T-cell (primary cell): ENCODE measurements at regions of chr14 and their contacts with region 1.

Region 1: DNA sequence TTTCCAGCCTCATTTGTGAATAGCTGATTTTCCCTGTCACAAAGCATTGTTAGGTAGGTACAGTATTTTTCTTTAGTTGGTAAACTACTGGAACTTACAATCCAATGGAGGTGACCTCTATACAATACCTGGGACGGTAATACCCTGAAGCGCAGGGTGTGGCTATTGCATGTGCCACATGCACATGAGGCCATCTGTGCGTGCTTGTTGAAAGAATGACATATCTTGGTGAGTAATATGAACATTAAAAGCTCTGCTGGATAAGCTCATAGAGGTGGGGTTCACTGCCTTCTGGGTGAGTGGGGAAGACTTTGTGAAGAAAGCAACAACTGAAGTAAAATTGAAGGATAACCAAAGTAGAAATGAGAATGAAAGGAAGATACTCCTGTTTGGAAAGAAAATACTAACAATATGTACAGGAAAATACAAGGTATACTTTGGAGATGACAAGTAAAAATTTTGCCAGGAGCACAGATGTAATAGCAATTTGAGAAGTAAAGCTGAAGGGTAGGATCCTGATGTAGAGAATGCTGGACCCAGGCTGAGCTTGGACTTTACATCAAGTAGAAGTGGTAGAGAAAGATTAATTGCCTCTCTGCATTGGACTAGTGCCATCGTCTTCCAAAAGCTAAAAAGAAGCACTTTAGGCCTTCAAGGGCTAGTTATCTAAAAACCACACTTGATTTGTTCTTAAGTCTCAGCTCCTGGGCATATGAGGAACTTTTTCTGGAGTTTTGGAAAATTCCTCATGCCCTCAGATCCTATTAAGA is 97.1 kb downstream of the SLC38A6 start:
- DNase-seq: no peak
- ATAC-seq: no peak
- H3K4me3 ChIP-seq: no peak overlapping the region
- H3K4me3 Mint-ChIP-seq: no peak overlapping the region
- H3K27ac ChIP-seq: no peak overlapping the region
- H3K27ac Mint-ChIP-seq: no peak overlapping the region
- H3K4me1 ChIP-seq: no peaks in the 10 kb centered on the region
- H3K4me1 Mint-ChIP-seq: no peaks in the 10 kb centered on the region
- H3K27me3 ChIP-seq: no peaks in the 10 kb centered on the region
- H3K27me3 Mint-ChIP-seq: no peaks in the 10 kb centered on the region

Region 2: DNA sequence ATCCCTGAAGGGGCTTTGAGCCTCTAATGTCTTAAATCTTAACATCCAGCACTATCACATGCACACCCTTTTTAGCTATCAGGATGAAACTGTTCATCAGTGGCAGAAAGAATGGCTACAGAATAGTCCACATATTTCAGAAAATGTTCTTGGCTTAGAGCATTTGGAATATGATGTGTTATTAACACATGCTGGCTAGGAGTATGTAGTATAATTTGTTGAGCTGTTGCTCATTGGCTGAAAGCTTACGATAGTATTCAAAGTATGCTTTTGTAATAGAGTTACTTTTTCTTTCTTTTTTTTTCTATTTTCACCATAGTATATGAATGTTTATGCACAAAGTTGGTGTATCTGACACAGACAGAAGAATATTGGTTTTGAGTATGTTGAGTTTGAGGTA is 288.5 kb before region 1 on chr14:
- CTCF ChIA-PET with region 1: no interaction called
- POLR2A ChIA-PET with region 1: no interaction called
- DNase-seq: no peak
- ATAC-seq: no peak
- H3K4me3 ChIP-seq: no peak overlapping the region
- H3K4me3 Mint-ChIP-seq: no peak overlapping the region
- H3K27ac ChIP-seq: no peak overlapping the region
- H3K27ac Mint-ChIP-seq: no peak overlapping the region
- H3K4me1 ChIP-seq: no peaks in the 10 kb centered on the region
- H3K4me1 Mint-ChIP-seq: peaks cover 0 to 6% (median 0%) of the 10 kb centered on the region in 3 donors
- H3K27me3 ChIP-seq: no peaks in the 10 kb centered on the region
- H3K27me3 Mint-ChIP-seq: no peaks in the 10 kb centered on the region

Region 3: GRCh38 chr14:61051051-61051450 is 27.1 kb before region 1 on chr14:
- CTCF ChIA-PET with region 1: no interaction called
- POLR2A ChIA-PET with region 1: no interaction called
- DNase-seq: no peak
- ATAC-seq: no peak
- H3K4me3 ChIP-seq: no peak overlapping the region
- H3K4me3 Mint-ChIP-seq: no peak overlapping the region
- H3K27ac ChIP-seq: no peak overlapping the region
- H3K27ac Mint-ChIP-seq: no peak overlapping the region
- H3K4me1 ChIP-seq: no peaks in the 10 kb centered on the region
- H3K4me1 Mint-ChIP-seq: no peaks in the 10 kb centered on the region
- H3K27me3 ChIP-seq: no peaks in the 10 kb centered on the region
- H3K27me3 Mint-ChIP-seq: no peaks in the 10 kb centered on the region

Region 4: GRCh38 chr14:61992139-61992538 is 914.0 kb after region 1 on chr14:
- CTCF ChIA-PET with region 1: interaction called in 1 of 2 experiments, 12 read pairs
- POLR2A ChIA-PET with region 1: no interaction called
- DNase-seq: no peak
- ATAC-seq: no peak
- H3K4me3 ChIP-seq: no peak overlapping the region
- H3K4me3 Mint-ChIP-seq: no peak overlapping the region
- H3K27ac ChIP-seq: no peak overlapping the region
- H3K27ac Mint-ChIP-seq: no peak overlapping the region
- H3K4me1 ChIP-seq: no peaks in the 10 kb centered on the region
- H3K4me1 Mint-ChIP-seq: no peaks in the 10 kb centered on the region
- H3K27me3 ChIP-seq: peaks cover 0 to 3% of the 10 kb centered on the region in 2 experiments
- H3K27me3 Mint-ChIP-seq: peaks cover 0 to 16% of the 10 kb centered on the region in 2 donors